ENCODE measurements at regions of chr1 and their contacts with region 1.

Region 1: GRCh38 chr1:211632631-211633523 is 42.5 kb downstream of the NEK2 start:
- DNase-seq: peak in 2 of 3 donors; percentile 60 to 63
- H3K4me3 ChIP-seq: no peak overlapping the region
- H3K27ac ChIP-seq: no peak overlapping the region
- H3K4me1 ChIP-seq: peaks cover 0 to 20% (median 14%) of the 10 kb centered on the region in 4 experiments
- H3K27me3 ChIP-seq: peaks cover 0 to 56% (median 11%) of the 10 kb centered on the region in 5 experiments

Region 2: GRCh38 chr1:211323156-211324063 is 309.5 kb before region 1 on chr1:
- CTCF ChIA-PET with region 1: no interaction called
- POLR2A ChIA-PET with region 1: no interaction called
- DNase-seq: peak; percentile 72 to 84 (median 84)
- H3K4me3 ChIP-seq: no peak overlapping the region
- H3K27ac ChIP-seq: no peak overlapping the region
- H3K4me1 ChIP-seq: peaks cover 8 to 38% (median 25%) of the 10 kb centered on the region in 4 experiments
- H3K27me3 ChIP-seq: no peaks in the 10 kb centered on the region

Region 3: DNA sequence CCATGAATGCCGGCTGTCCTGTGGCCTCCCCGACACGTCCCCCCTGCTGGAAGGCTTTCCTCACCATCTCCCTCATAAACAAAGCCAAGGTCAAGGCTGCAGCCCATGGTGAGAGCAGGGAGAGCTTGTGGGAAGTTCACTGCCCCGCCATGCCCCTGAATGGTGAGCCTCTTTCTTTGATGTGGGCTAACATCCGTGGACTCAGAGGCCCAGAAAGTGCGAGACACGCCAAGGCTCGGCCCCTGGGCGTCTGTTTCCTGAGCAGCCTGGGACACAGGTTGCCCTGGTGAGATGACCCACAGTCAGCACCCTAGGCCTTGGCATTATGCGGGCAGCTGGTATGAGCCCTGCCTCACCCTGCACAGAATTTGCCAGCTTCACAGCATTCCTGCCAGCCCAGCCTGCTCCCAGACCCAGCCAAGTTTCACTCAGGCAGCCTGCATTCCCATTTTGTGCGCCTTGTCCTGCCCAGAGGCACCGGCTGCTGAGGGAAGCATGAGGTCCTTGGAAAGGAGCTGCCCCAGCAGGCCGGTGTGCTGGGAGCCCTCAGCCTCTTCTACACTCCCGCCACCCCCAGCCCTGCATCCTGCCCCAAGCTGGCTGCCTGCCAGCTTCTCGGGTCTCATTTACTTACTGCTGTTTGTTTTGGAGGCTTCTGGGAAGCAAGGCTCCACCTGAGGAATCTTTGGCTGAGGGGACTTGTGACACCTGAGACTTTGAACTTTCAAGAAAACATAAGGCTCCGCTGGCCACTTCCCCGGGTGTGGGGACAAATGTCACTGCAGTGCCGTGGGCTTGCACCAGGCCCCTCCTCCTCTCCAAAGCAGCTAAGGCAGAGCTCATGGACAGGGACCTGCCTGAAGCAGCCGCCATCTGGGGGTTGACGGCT is 10.7 kb after region 1 on chr1:
- CTCF ChIA-PET with region 1: interaction called, 114 read pairs
- POLR2A ChIA-PET with region 1: no interaction called
- DNase-seq: peak in 2 of 3 donors; percentile 33 to 46
- H3K4me3 ChIP-seq: peak overlapping the region in 1 of 7 experiments; percentile 19
- H3K27ac ChIP-seq: no peak overlapping the region
- H3K4me1 ChIP-seq: peaks cover 0 to 8% (median 8%) of the 10 kb centered on the region in 4 experiments
- H3K27me3 ChIP-seq: peaks cover 0 to 16% (median 4%) of the 10 kb centered on the region in 5 experiments

Measured in common myeloid progenitor, CD34-positive (primary cell).